ENCODE measurements at regions of chr17 and their contacts with region 1.

Region 1: GRCh38 chr17:5184288-5184687 is 7.4 kb downstream of the ZNF594 start:
- DNase-seq: peak in 2 of 14 experiments; percentile 46 to 70
- ATAC-seq: no peak
- H3K4me3 ChIP-seq: no peak overlapping the region
- H3K4me3 Mint-ChIP-seq: no peak overlapping the region
- H3K27ac ChIP-seq: no peak overlapping the region
- H3K27ac Mint-ChIP-seq: no peak overlapping the region
- H3K4me1 ChIP-seq: no peaks in the 10 kb centered on the region
- H3K4me1 Mint-ChIP-seq: no peaks in the 10 kb centered on the region
- H3K27me3 ChIP-seq: no peaks in the 10 kb centered on the region
- H3K27me3 Mint-ChIP-seq: no peaks in the 10 kb centered on the region
- CTCF ChIP-seq: no peak

Region 2: DNA sequence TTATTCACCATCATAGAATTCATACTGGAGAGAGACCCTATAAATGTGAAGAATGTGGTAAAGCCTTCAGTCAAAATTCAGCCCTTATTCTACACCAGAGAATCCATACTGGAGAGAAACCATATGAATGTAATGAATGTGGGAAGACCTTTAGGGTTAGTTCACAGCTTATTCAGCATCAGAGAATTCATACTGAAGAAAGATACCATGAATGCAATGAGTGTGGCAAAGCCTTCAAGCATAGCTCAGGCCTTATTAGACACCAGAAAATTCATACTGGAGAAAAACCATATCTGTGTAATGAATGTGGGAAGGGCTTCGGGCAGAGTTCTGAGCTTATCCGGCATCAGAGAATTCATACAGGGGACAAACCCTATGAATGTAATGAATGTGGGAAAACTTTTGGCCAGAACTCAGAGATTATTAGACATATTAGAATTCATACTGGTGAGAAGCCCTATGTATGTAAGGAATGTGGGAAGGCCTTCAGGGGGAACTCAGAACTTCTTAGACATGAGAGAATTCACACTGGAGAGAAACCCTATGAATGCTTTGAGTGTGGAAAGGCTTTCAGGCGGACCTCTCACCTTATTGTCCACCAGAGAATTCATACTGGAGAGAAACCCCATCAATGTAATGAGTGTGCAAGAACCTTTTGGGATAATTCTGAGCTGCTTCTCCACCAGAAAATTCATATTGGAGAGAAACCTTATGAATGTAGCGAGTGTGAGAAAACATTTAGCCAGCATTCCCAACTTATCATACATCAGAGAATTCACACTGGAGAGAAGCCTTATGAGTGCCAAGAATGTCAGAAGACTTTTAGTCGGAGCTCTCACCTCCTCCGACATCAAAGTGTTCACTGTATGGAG is 91.9 kb before region 1 on chr17:
- CTCF ChIA-PET with region 1: no interaction called
- POLR2A ChIA-PET with region 1: no interaction called
- intact Hi-C with region 1: loop called in 1 of 2 experiments (anchors 5 kb)
- DNase-seq: no peak
- ATAC-seq: no peak
- H3K4me3 ChIP-seq: no peak overlapping the region
- H3K4me3 Mint-ChIP-seq: no peak overlapping the region
- H3K27ac ChIP-seq: no peak overlapping the region
- H3K27ac Mint-ChIP-seq: no peak overlapping the region
- H3K4me1 ChIP-seq: peaks cover 7% of the 10 kb centered on the region
- H3K4me1 Mint-ChIP-seq: peaks cover 11% of the 10 kb centered on the region
- H3K27me3 ChIP-seq: peaks cover 6% of the 10 kb centered on the region in 2 experiments
- H3K27me3 Mint-ChIP-seq: no peaks in the 10 kb centered on the region
- CTCF ChIP-seq: no peak